ENCODE measurements at regions of chr2 and their contacts with region 1.

Region 1: GRCh38 chr2:32010670-32011484 is at the start of gene MEMO1:
- DNase-seq: peak; percentile 97
- ATAC-seq: peak; percentile 82
- H3K4me3 Mint-ChIP-seq: peak within 1 kb of the TSS; percentile 94
- H3K27ac Mint-ChIP-seq: peak within 1 kb of the TSS; percentile 98
- H3K4me1 Mint-ChIP-seq: peaks cover 32% of the 10 kb centered on the region
- H3K27me3 Mint-ChIP-seq: no peaks in the 10 kb centered on the region
- total RNA-seq, gene MEMO1: 49.8 to 53.5 TPM

Region 2: DNA sequence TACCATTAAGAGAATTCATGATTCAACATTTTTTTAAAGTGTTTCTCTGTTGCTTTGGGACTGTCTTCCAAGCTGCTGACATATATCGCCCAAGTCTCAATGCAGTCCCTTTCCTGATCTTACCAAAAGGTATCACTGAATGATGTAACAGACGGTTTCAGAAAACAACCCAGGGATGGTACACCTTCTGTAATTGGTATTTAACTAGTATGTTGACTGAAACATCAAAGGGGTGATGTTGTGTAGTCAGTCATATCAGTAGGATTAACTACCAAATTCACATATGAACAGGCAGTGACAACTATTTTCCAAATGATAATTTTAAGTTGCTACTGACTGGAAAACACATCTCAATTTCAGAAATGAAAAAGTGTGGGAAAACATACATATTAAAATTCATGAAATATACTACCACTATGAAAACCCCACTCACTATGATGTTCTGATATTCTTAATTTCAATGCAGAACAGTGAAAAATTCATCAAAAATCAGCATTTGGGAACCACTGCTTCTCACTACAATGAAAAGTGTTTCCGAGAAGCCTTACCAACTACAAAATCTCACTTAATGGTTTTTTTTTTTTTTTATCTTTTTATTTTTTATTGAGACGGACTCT is 59.8 kb before region 1 on chr2:
- CTCF ChIA-PET with region 1: no interaction called
- POLR2A ChIA-PET with region 1: no interaction called
- intact Hi-C with region 1: loop called (anchors 2 to 5 kb)
- DNase-seq: peak; percentile 22
- ATAC-seq: peak; percentile 96
- H3K4me3 Mint-ChIP-seq: no peak overlapping the region
- H3K27ac Mint-ChIP-seq: peak overlapping the region; percentile 23
- H3K4me1 Mint-ChIP-seq: peaks cover 51% of the 10 kb centered on the region
- H3K27me3 Mint-ChIP-seq: no peaks in the 10 kb centered on the region

Region 3: GRCh38 chr2:31997653-31998052 is 13.2 kb before region 1 on chr2:
- CTCF ChIA-PET with region 1: interaction called, 16 read pairs
- POLR2A ChIA-PET with region 1: interaction called, 7 read pairs
- intact Hi-C with region 1: no loop called
- DNase-seq: no peak
- ATAC-seq: peak; percentile 58
- H3K4me3 Mint-ChIP-seq: no peak overlapping the region
- H3K27ac Mint-ChIP-seq: peak overlapping the region; percentile 8
- H3K4me1 Mint-ChIP-seq: peaks cover 58% of the 10 kb centered on the region
- H3K27me3 Mint-ChIP-seq: no peaks in the 10 kb centered on the region

Region 4: GRCh38 chr2:32063310-32064161 is 52.7 kb after region 1 on chr2 and contains the start of gene SPAST:
- CTCF ChIA-PET with region 1: interaction called, 4 read pairs
- POLR2A ChIA-PET with region 1: interaction called, 5 read pairs
- intact Hi-C with region 1: loop called (anchors 1 kb)
- DNase-seq: peak; percentile 98
- ATAC-seq: peak; percentile 95
- H3K4me3 Mint-ChIP-seq: peak within 1 kb of the TSS; percentile 97
- H3K27ac Mint-ChIP-seq: peak within 1 kb of the TSS; percentile 94
- H3K4me1 Mint-ChIP-seq: peaks cover 23% of the 10 kb centered on the region
- H3K27me3 Mint-ChIP-seq: no peaks in the 10 kb centered on the region
- total RNA-seq, gene SPAST: 16.8 to 19.5 TPM

Region 5: GRCh38 chr2:32277674-32278482 is 267.0 kb after region 1 on chr2 and contains the start of gene YIPF4:
- CTCF ChIA-PET with region 1: no interaction called
- POLR2A ChIA-PET with region 1: no interaction called
- intact Hi-C with region 1: loop called in 1 of 2 experiments (anchors 5 kb)
- DNase-seq: peak; percentile 89
- ATAC-seq: peak; percentile 99
- H3K4me3 Mint-ChIP-seq: peak within 1 kb of the TSS; percentile 94
- H3K27ac Mint-ChIP-seq: peak within 1 kb of the TSS; percentile 93
- H3K4me1 Mint-ChIP-seq: peaks cover 24% of the 10 kb centered on the region
- H3K27me3 Mint-ChIP-seq: no peaks in the 10 kb centered on the region
- total RNA-seq, gene YIPF4: 17.5 to 37.6 TPM